Activated T-helper 2 cell treated with anti-CD3 and anti-CD28 coated beads, Interferon-gamma antibody, Interleukin-2, Interleukin-4, amounts not matched to agents 10 μg/mL and 5 μg/mL and 100 μg/mL, durations not matched to agents 14 hours and 24 hours and 36 hours (primary cell): ENCODE measurements at regions of chr19 and their contacts with region 1.

Region 1: GRCh38 chr19:58466760-58467589 is at the start of gene ZNF324:
- DNase-seq: peak; percentile 96
- H3K4me3 Mint-ChIP-seq: peak within 1 kb of the TSS; percentile 80
- H3K27ac Mint-ChIP-seq: peak within 1 kb of the TSS; percentile 68
- H3K4me1 Mint-ChIP-seq: peaks cover 13% of the 10 kb centered on the region
- H3K27me3 Mint-ChIP-seq: no peaks in the 10 kb centered on the region
- total RNA-seq, gene ZNF324: 11.6 and 12.3 TPM in 2 replicates

Region 2: GRCh38 chr19:58416604-58417003 is 50.4 kb before region 1 on chr19:
- intact Hi-C with region 1: no loop called
- DNase-seq: no peak
- H3K4me3 Mint-ChIP-seq: no peak overlapping the region
- H3K27ac Mint-ChIP-seq: no peak overlapping the region
- H3K4me1 Mint-ChIP-seq: no peaks in the 10 kb centered on the region
- H3K27me3 Mint-ChIP-seq: no peaks in the 10 kb centered on the region

Region 3: GRCh38 chr19:58439576-58440554 is 27.1 kb before region 1 on chr19 and contains the start of gene ZNF132:
- intact Hi-C with region 1: loop called (anchors 1 kb)
- DNase-seq: peak; percentile 94
- H3K4me3 Mint-ChIP-seq: peak within 1 kb of the TSS; percentile 85
- H3K27ac Mint-ChIP-seq: peak within 1 kb of the TSS; percentile 80
- H3K4me1 Mint-ChIP-seq: peaks cover 18% of the 10 kb centered on the region
- H3K27me3 Mint-ChIP-seq: no peaks in the 10 kb centered on the region
- total RNA-seq, gene ZNF132: 3.2 and 3.4 TPM in 2 replicates